ENCODE measurements at regions of chr18 and their contacts with region 1.

Region 1: DNA sequence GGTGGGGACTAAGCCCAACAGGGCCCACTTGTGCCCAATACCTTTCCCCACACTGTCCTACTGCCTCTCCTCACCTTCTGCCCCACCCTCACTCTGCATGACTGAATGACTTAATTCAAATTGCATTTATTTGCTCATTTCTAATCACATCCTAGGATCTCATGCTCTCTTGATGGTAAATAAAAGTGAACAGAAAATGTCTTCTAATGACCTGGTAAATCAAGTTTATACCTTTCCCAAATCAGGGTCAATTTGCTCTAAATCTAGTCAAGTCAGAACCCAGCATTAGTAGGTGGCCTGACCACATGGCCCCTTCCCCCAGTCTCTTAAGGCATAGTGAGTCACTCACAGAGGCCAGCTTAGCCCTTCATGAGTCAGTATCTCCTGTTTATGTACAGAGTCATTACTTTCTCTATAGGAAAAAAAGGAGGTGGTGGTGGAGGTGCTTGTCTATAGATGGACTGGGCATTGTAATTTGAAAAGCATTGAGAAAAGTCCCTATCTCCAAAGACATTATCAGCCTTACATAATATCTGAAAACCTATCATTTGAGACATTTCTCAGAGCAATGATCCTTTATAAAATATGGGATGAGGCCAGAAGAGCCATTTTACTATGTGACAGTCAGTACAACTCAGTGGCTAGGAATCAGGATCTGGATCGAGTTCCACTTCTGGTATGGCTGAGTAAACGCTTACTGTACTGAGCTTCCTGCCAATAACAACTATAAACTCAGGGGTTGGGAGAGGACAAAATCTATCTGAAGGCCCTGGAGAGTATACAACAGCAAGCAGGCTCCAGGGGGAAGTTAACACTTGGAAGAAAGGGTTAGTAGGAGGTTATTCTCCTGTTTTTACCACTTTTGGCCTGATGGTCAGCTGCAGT is 22.6 kb upstream of the SIGLEC15 start:
- DNase-seq: peak; percentile 93
- ATAC-seq: peak; percentile 90
- H3K4me3 ChIP-seq: peak overlapping the region; percentile 15 to 50
- H3K27ac ChIP-seq: peak overlapping the region; percentile 86
- H3K4me1 ChIP-seq: peaks cover 14 to 59% of the 10 kb centered on the region in 2 experiments; a peak in 3 of 4 replicates
- H3K27me3 ChIP-seq: no peaks in the 10 kb centered on the region
- CTCF ChIP-seq: no peak
- POLR2A ChIP-seq: no peak
- RAD21 ChIP-seq: 0 out of 2 replicates have a peak, but pooled peaks have one; percentile 18

Region 2: DNA sequence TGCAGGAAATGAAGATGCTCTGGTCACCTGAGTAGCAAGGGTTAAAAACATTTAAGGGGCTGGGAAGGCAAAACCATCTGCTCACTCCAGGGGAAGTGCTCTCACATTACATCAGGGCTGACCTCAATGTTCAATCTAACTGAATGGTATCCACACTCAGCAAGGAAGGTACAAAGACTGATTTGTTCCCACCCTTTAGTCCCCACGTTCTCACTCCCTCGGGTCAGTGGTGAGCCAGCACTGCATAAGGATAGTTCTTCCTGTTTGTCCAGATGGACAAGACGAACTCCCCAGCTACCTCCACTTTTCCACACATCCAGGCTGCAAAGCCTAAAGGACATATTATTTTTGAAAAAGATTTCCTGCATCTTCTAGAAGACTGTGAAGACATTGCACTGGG is 314.2 kb before region 1 on chr18:
- CTCF ChIA-PET with region 1: no interaction called
- POLR2A ChIA-PET with region 1: no interaction called
- RAD21 ChIA-PET with region 1: no interaction called
- intact Hi-C with region 1: no loop called
- DNase-seq: no peak
- ATAC-seq: no peak
- H3K4me3 ChIP-seq: no peak overlapping the region
- H3K27ac ChIP-seq: no peak overlapping the region
- H3K4me1 ChIP-seq: no peaks in the 10 kb centered on the region
- H3K27me3 ChIP-seq: no peaks in the 10 kb centered on the region; the same call in 1 of the 2 replicates
- CTCF ChIP-seq: no peak
- POLR2A ChIP-seq: no peak
- RAD21 ChIP-seq: no peak

Region 3: GRCh38 chr18:45702866-45703265 is 100.0 kb before region 1 on chr18:
- CTCF ChIA-PET with region 1: no interaction called
- POLR2A ChIA-PET with region 1: no interaction called
- RAD21 ChIA-PET with region 1: no interaction called
- intact Hi-C with region 1: no loop called
- DNase-seq: no peak
- ATAC-seq: no peak
- H3K4me3 ChIP-seq: no peak overlapping the region
- H3K27ac ChIP-seq: no peak overlapping the region
- H3K4me1 ChIP-seq: no peaks in the 10 kb centered on the region
- H3K27me3 ChIP-seq: no peaks in the 10 kb centered on the region; the same call in 1 of the 2 replicates
- CTCF ChIP-seq: no peak
- POLR2A ChIP-seq: no peak
- RAD21 ChIP-seq: no peak

Region 4: DNA sequence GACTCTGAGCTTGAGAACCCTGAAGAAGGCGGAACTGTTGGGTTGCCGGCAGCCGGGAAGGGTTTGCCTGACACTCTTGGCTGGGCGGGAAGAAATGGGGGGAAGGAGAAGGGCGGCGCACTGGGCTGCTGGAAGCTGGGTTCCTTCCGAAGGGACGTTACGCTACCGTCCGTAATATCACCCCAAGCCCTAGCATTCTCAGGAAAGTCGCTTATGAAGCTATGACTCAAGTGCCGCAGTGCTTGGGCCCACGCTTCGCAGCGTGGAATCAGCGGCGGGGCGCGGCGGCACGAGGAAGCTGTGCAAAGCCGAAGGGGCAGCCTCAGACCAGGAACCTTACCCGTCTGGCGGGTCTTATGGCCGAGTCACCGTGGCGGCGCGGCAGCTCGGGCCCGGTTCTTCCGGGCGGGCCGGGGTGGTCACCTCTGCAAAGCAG is 27.6 kb before region 1 on chr18:
- CTCF ChIA-PET with region 1: no interaction called
- POLR2A ChIA-PET with region 1: interaction called, 3 read pairs
- RAD21 ChIA-PET with region 1: no interaction called
- intact Hi-C with region 1: loop called (anchors 2 kb)
- DNase-seq: peak; percentile 69
- ATAC-seq: peak; percentile 90
- H3K4me3 ChIP-seq: peak overlapping the region; percentile 65 to 76
- H3K27ac ChIP-seq: peak overlapping the region; percentile 61
- H3K4me1 ChIP-seq: 0 out of 4 replicates have a peak, but pooled peaks cover 0 to 5% of the 10 kb centered on the region in 2 experiments
- H3K27me3 ChIP-seq: no peaks in the 10 kb centered on the region
- CTCF ChIP-seq: no peak
- POLR2A ChIP-seq: peak; percentile 80
- RAD21 ChIP-seq: 0 out of 2 replicates have a peak, but pooled peaks have one; percentile 4

Region 5: DNA sequence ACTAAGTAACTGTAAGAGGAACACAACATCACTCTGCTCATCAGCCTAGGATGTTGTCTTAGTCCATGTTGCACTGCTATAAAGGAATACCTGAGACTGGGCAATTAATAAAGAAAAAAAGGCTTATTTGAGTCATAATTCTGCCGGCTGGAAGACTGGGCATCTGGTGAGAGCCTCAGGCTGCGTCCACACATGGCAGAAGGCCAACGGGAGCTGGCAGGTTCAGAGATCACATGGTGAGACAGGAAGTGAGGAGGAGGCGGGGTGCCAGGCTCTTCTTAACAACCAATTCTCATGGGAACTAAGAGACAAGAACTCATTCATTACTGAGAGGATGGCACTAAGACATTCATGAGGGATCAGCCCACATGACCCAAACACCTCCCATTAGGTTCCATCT is 117.5 kb after region 1 on chr18:
- CTCF ChIA-PET with region 1: no interaction called
- POLR2A ChIA-PET with region 1: no interaction called
- RAD21 ChIA-PET with region 1: no interaction called
- intact Hi-C with region 1: no loop called
- DNase-seq: no peak
- ATAC-seq: no peak
- H3K4me3 ChIP-seq: no peak overlapping the region
- H3K27ac ChIP-seq: no peak overlapping the region
- H3K4me1 ChIP-seq: peaks cover 0 to 4% of the 10 kb centered on the region in 2 experiments; a peak in 1 of 4 replicates
- H3K27me3 ChIP-seq: no peaks in the 10 kb centered on the region
- CTCF ChIP-seq: no peak
- POLR2A ChIP-seq: no peak
- RAD21 ChIP-seq: no peak

Measured in HCT116 (cell line).